Posterior vena cava (tissue), 2 donors: ENCODE measurements at regions of chr10 and their contacts with region 1.

Region 1: DNA sequence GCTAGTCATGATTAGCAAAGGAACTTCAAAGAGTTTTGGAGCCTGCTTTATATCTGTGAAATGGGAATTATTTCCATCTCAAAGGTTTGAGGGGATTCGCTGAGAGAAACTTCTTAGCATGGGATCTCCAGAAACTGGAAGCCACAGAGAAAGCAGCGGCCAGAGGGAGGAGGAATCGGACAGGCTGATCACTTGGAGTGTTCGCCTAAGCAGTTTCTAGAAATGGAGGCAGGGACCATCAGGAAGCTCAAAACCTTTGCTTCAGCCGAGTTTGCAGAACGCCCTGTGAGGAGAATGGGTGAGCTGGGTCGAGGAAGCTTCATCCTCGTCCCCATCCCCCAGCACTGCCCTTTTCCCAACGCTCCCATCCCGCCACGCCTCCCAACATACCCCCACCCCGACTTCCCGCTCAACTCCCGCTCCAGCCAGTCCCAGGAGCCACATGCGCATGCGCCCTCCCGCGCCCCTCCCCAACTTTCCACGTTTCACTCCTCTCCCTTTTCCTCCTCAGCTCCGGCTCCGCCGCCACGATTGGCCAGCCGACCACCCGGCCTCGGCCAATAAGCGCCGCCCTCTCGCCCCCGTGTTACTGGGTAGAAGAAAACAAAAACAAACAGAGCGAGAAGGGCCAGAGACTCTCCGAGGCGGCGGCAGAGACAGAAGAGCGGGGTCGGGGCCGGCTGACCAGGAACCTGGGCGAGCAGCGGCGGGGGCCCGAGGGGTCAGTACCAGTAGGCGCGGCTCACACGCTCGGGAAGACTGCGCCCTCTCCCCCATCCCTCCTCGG is at the start of gene PDCD4:
- DNase-seq: peak; percentile 100
- total RNA-seq, gene PDCD4: 54.9 to 55.0 TPM

Region 2: GRCh38 chr10:110803830-110804338 is 67.6 kb before region 1 on chr10:
- intact Hi-C with region 1: loop called in 1 of 2 experiments (anchors 5 kb)
- DNase-seq: no peak